A549 (cell line): ENCODE measurements at regions of chr15 and their contacts with region 1.

Region 1: DNA sequence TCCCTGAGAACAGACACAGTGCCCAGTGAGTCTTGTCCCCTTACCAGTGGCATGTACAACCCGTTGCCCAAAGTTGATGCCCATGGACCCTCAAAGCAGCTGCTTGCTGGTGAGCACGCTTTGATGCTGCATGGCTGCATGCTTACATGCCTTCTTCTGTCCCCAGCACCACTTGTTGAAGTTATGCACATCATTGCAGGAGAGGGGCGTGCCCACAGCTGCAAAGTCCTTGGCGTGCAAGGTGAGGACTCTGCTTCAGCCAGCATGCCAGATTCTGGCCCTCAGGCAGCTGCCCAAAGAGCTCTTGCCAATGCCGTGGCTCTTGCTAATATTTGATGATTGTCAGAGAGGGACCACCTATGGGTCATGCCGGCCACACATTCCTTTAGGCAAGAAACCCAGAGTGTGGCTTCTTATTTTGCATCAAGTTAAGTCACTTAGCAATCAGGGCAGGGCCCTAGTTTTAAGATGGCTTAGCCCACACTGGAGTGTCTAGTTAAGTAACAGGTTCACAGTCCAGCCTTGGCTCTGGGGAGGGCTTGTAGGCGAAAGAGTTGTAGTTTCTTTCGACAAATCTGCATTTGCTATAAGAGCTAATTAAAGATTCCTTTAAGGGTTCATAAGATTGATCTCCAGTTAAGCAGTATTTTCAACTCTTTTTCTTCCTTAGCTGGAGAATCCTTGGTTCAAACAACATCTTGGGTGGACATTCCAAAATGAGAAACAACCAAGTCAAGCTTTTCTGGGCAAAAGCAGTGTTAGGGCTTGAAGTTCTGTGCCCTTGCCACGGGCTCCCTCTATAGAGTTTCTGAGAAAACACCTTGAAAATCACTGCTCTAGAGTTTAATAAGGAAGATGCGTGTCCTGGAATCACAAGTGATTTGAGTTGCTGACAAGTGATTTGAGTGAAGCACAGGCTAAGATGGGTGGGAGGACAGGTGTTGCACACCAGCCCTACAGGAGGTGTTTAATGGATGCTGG is 128.6 kb downstream of the SLCO3A1 start:
- DNase-seq: peak in 1 of 2 experiments; percentile 17
- ATAC-seq: peak; percentile 62 to 72; a peak in 4 of 6 replicates
- H3K4me3 ChIP-seq: no peak overlapping the region
- H3K27ac ChIP-seq: no peak overlapping the region
- H3K4me1 ChIP-seq: no peaks in the 10 kb centered on the region
- CTCF ChIP-seq: peak; percentile 49
- EP300 ChIP-seq: no peak
- POLR2A ChIP-seq: no peak
- RAD21 ChIP-seq: peak; percentile 66 to 70

Region 2: DNA sequence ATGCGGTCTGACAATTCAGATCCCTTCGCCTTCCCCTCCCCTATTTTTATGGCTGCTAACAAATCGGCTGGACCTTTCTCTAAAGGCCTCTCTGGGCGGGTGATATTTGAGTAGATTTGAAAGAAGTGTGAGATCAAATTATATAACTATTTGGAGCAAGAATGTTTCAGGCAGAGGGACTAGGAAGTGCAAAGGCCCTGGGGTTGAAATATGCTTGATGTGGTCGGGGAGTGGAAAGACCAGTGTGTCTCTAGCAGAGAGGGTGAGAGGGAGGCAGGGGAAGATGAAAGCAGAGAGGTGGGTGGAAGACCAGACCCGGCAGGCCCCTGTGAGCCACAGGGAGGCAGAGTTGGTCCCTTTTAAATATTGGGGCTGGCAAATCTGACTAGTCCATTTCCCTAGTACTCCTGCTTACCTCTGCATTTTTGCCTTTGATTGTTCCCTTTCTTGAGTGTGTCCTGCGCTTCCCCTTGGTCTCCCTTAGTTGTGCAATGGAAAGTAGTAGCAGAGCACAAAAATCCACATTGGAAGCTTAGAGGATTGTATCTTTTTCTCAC is 96.3 kb before region 1 on chr15:
- CTCF ChIA-PET with region 1: interaction called, 16 read pairs
- POLR2A ChIA-PET with region 1: no interaction called
- DNase-seq: no peak
- ATAC-seq: peak in 1 of 2 experiments; percentile 55; a peak in 3 of 6 replicates
- H3K4me3 ChIP-seq: no peak overlapping the region
- H3K27ac ChIP-seq: no peak overlapping the region
- H3K4me1 ChIP-seq: peaks cover 8% of the 10 kb centered on the region
- CTCF ChIP-seq: 0 out of 3 replicates have a peak, but pooled peaks have one; percentile 15
- EP300 ChIP-seq: no peak
- POLR2A ChIP-seq: no peak
- RAD21 ChIP-seq: peak; percentile 32 to 38; a peak in 4 of 5 replicates

Region 3: GRCh38 chr15:91942676-91943576 is 39.2 kb before region 1 on chr15:
- CTCF ChIA-PET with region 1: interaction called, 13 read pairs
- POLR2A ChIA-PET with region 1: no interaction called
- DNase-seq: peak; percentile 64 to 84
- ATAC-seq: peak; percentile 75 to 85
- H3K4me3 ChIP-seq: peak overlapping the region; percentile 23; the same call in 1 of the 3 replicates
- H3K27ac ChIP-seq: peak overlapping the region; percentile 53 to 77
- H3K4me1 ChIP-seq: peaks cover 57% of the 10 kb centered on the region
- CTCF ChIP-seq: no peak
- EP300 ChIP-seq: no peak
- POLR2A ChIP-seq: no peak
- RAD21 ChIP-seq: no peak

Region 4: DNA sequence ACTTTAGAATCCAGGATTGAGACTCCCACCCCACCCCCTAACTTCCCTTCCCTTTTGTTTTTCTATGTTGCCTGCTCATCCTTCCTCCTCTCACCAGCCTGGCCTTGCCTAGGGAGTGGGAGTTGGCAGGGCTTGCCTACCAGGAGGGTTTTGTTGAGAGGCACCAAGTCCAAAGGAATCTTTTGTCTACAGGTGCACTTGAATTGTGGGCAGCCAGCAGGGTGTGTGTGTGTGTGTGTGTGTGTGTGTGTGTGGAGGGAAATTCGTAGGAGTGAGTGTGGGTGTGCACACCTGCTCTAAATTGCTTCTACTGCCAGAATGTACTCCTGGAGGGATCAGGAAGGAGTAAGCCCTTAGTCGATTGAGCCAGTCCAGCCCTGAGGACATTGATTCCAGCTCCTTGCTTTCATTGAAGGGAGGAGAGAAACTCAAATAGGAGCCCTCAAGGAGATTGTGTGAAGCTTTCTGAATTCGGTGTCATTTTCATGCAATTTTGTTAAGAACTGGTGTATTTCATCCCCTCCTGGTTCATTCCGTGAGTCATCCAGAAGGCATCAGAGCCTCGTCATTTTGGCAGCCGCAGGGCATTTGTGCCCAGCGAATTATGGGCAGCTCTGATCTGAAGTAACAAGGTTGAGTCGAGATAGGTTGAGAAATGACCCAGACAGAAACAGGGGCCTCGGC is 16.5 kb before region 1 on chr15:
- CTCF ChIA-PET with region 1: interaction called, 52 read pairs
- POLR2A ChIA-PET with region 1: interaction called, 3 read pairs
- DNase-seq: peak; percentile 77 to 80
- ATAC-seq: peak; percentile 87 to 89
- H3K4me3 ChIP-seq: peak overlapping the region; percentile 5; the same call in 1 of the 3 replicates
- H3K27ac ChIP-seq: peak overlapping the region; percentile 72 to 87
- H3K4me1 ChIP-seq: peaks cover 39% of the 10 kb centered on the region
- CTCF ChIP-seq: no peak
- EP300 ChIP-seq: no peak; a peak in 1 of 5 replicates
- POLR2A ChIP-seq: no peak
- RAD21 ChIP-seq: 0 out of 5 replicates have a peak, but pooled peaks of 1 of the 2 experiments have one; percentile 9

Region 5: GRCh38 chr15:91992945-91993344 is 10.8 kb after region 1 on chr15:
- CTCF ChIA-PET with region 1: interaction called, 45 read pairs
- POLR2A ChIA-PET with region 1: interaction called, 3 read pairs
- DNase-seq: no peak
- ATAC-seq: no peak
- H3K4me3 ChIP-seq: no peak overlapping the region
- H3K27ac ChIP-seq: no peak overlapping the region
- H3K4me1 ChIP-seq: no peaks in the 10 kb centered on the region
- CTCF ChIP-seq: no peak
- EP300 ChIP-seq: no peak
- POLR2A ChIP-seq: no peak
- RAD21 ChIP-seq: no peak